Left cardiac atrium (tissue), 4 donors: ENCODE measurements at regions of chr17 and their contacts with region 1.

Region 1: GRCh38 chr17:45371414-45372327 is 54.9 kb upstream of the MAP3K14 start:
- DNase-seq: peak; percentile 91
- ATAC-seq: peak; percentile 96 to 98

Region 2: DNA sequence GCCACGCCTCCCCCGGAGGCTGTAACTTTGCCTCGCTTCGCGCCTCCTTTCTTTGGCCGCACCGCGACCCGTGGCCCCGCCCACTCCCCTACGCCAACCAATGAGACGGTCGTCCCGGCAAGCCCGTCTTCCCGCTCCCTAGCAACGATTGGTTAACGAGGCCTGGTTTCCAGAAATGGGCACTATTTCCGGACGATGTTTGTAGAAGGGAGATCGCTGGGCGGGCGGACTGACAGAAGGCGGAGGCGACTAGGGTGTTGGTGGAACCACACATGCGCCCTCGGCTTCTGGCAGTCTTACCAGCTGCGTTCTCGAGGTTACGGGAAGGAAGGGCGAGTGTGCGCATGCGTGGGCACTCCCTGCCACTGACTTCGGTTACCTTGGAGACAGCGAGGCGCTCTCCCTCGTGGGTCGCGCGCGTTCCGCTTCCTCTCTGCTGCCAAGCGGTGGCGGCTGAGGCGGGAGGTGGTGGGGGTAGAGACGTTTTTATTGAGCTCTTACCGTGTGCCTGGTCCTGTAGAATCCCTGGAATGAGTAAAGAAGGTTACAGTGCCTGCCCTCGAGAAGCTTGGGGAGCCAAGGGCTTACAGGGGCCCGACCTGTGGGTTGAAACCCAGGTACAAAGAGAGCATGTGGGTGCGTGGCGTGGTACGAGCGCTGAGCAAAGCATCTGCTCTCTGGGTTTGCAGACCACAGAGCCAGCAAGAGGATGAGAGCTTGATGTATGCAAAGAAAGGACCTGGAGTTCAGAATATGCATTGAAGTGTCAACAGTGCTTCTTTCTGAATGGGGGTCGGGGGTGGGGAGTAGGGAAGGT is 54.4 kb before region 1 on chr17:
- intact Hi-C with region 1: loop called in 1 of 2 experiments (anchors 5 kb)
- DNase-seq: peak; percentile 100
- ATAC-seq: peak; percentile 92 to 93